ENCODE measurements at regions of chr20 and their contacts with region 1.

Region 1: DNA sequence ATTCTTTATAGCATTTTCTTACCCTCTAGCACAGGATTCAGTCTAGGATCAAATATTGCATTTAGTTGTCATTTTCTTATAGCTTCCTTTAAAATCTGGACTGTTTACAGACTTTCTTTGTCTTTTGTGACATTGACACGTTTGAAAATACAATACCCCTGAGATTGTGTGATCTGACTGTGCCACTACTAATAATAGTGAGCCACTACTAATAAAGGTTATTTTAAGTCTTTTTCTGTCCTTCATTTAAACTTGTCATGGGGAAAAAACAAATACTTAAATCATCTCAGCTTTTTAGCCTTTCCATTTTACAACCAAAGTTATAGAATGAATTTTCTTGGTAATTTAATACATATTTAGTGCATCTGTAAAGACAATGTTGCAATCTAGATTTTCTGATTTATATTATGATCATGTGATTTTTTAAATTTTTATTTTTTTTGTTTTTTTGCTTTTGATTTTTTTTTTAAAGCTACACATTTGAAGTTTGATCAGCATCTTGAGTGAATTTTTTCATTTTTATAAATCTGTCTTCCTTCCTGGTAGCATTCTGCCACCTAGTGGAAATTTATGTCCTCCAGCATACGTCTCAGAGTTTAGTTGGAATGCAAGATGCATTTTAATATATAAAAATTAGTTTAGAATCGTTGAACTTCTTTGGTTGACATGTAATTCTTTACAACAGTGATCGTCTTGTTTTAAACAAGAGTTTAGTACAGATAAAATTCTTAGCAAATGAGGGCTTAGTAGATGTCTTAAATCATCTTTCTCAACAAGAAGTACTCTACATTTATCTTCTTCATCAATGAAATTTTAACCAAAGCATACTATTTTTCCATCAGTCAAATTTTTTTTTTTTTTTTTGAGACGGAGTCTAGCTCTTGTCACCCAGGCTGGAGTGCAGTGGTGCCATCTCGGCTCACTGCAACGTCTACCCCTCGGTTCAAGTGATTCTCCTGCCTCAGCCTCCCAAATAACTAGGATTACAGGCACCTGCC is 119.4 kb downstream of the NCOA3 start:
- DNase-seq: no peak
- H3K4me3 ChIP-seq: no peak overlapping the region
- H3K27ac ChIP-seq: no peak overlapping the region
- H3K4me1 ChIP-seq: peaks cover 0 to 13% (median 0%) of the 10 kb centered on the region in 4 donors
- H3K27me3 ChIP-seq: no peaks in the 10 kb centered on the region
- CTCF ChIP-seq: peak; percentile 72 to 85

Region 2: DNA sequence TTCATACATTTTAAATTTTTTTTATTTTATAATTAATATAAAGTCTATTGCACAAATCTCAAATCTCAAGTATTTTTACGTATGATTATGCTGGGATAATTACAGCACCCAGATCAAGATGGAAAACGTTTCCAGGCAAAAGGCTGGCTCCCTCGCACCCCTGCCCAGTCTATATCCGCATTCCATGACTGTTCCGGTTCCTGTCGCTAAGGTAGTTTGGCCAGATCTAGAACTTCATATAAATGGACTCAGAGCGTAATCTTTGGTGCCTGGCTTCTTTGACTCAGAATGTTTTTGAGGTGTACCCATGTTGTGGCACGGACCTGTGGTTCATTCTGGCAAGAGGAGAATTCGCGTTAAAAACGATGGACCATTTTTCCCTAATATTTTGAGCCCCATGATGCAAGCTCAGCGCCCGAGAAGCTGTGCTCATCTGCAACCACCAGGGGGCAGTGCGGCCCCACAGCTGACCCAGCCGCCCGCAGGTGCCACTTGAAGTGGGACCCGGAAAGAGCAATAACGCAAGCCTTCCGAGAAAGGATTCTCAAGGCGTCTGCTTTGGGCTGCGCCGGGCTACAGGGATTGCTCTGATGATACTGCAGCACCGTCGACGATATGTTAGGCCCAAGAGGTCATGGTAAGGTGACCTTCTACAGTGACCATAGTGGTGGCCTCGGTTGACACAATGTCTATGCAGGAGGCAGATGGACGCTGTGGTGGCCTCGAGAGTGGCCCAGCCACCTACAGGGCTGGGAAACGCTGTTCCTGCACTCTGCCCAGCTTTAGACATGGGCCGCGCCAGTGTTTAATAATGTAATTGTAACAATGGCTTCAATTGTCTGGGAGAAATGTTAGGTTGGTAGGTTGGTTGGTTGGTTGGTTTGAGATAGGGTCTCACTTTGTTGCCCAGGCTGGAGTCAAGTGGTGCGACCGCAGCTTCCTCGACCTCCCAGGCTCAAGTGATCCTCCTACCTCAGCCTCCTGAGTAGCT is 424.7 kb before region 1 on chr20:
- intact Hi-C with region 1: loop called (anchors 5 kb)
- DNase-seq: peak; percentile 56 to 80
- H3K4me3 ChIP-seq: peak overlapping the region in 1 of 2 donors; percentile 6
- H3K27ac ChIP-seq: no peak overlapping the region
- H3K4me1 ChIP-seq: peaks cover 0 to 8% (median 0%) of the 10 kb centered on the region in 4 donors
- H3K27me3 ChIP-seq: no peaks in the 10 kb centered on the region
- CTCF ChIP-seq: peak; percentile 94 to 98

Region 3: DNA sequence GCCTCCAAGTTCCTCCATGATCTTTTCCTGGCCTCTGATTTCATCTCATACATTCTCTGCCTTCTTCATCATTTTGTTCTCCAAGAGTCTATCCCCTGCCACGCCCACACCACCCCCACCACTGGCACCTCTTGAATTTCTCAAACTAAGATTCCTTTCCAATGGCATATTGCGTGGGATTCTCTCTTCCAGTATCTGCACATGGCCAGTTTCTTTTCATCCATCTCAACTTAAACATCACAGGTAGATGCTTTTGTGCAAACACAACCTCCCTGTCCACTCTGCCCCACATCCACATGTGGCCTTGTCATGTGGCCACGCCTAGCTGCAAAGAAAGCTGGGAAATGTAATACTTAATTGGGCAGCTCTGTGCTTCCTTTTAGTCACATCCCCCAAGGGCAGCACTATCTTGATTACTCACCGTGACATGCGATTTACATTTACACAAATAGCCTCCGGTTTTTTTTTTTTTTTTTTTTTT is 231.2 kb before region 1 on chr20:
- intact Hi-C with region 1: loop called (anchors 10 kb)
- DNase-seq: no peak
- H3K4me3 ChIP-seq: no peak overlapping the region
- H3K27ac ChIP-seq: no peak overlapping the region
- H3K4me1 ChIP-seq: no peaks in the 10 kb centered on the region
- H3K27me3 ChIP-seq: no peaks in the 10 kb centered on the region
- CTCF ChIP-seq: no peak

Region 4: GRCh38 chr20:47922252-47922651 is 301.1 kb after region 1 on chr20:
- intact Hi-C with region 1: no loop called
- DNase-seq: no peak
- H3K4me3 ChIP-seq: no peak overlapping the region
- H3K27ac ChIP-seq: no peak overlapping the region
- H3K4me1 ChIP-seq: peaks cover 0 to 16% (median 3%) of the 10 kb centered on the region in 4 donors
- H3K27me3 ChIP-seq: peaks cover 0 to 25% of the 10 kb centered on the region in 2 donors
- CTCF ChIP-seq: no peak